Endothelial cell of umbilical vein (primary cell): ENCODE measurements at regions of chr2 and their contacts with region 1.

Region 1: DNA sequence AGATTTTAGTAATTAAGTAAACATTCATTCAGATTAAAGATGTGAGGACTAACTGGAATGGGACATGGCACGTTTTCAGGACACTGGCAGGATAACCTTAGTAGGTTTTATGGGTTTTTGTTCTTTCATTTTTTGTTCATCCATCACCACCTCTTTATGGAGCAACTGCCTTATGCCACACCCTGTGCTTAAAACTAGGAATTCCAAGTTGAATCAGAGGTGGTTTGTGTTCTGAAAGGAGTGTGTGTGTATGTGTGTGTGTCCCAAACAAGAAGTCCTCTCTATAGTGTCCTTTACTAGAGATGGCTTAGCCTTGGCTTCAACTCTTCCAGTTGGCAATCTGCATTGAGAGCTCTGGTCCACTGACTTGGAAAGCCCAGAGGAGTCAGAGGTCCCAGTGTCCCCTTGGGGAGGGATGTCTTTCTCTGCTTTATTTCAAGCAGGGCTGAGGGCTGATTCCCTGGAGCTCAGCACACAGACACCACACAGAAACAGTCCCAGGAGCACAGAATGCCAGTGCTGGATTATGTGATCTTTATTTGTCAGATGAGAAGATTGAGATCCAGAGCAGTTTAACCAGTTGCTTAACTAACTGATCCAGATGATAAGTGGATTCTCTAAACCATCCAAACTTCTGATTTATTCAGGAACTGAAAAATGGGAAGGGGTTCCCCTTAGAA is 25.2 kb downstream of the RHOB start:
- DNase-seq: no peak
- H3K4me3 ChIP-seq: no peak overlapping the region
- H3K27ac ChIP-seq: no peak overlapping the region
- H3K4me1 ChIP-seq: no peaks in the 10 kb centered on the region
- H3K27me3 ChIP-seq: no peaks in the 10 kb centered on the region
- CTCF ChIP-seq: no peak
- POLR2A ChIP-seq: no peak

Region 2: GRCh38 chr2:20424300-20425290 is 47.4 kb before region 1 on chr2:
- CTCF ChIA-PET with region 1: no interaction called
- POLR2A ChIA-PET with region 1: no interaction called
- dilution Hi-C with region 1: no loop called
- intact Hi-C with region 1: loop called (anchors 2 kb)
- DNase-seq: peak; percentile 51
- H3K4me3 ChIP-seq: no peak overlapping the region
- H3K27ac ChIP-seq: no peak overlapping the region
- H3K4me1 ChIP-seq: peaks cover 12% of the 10 kb centered on the region
- H3K27me3 ChIP-seq: no peaks in the 10 kb centered on the region
- CTCF ChIP-seq: no peak
- POLR2A ChIP-seq: no peak